Breast epithelium (tissue), 4 donors: ENCODE measurements at regions of chrX and their contacts with region 1.

Region 1: GRCh38 chrX:118164138-118164537 is 47.5 kb upstream of the KLHL13 start:
- DNase-seq: no peak
- H3K4me3 ChIP-seq: no peak overlapping the region
- H3K27ac ChIP-seq: no peak overlapping the region
- H3K4me1 ChIP-seq: no peaks in the 10 kb centered on the region
- H3K27me3 ChIP-seq: peaks cover 0 to 2% of the 10 kb centered on the region in 2 donors
- CTCF ChIP-seq: no peak
- POLR2A ChIP-seq: no peak

Region 2: DNA sequence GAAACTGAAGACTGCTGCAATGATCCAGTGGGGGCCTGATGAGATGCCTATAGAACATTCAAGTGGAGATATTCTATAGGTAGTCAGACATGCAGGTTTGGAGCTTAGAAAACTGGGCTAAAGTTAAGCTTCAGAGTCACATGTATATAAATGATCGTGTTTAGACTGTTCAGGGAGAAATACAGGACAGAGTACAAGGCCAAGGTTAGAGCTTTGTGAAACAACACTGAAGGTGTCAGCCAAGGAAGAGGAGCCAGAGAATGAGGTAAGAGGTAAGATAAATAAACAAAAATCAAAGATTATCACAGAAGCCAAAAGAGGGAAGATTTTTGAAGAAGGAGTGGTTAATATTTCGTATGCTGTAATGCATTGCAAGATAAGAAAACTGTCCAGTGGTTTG is 10.4 kb after region 1 on chrX:
- intact Hi-C with region 1: loop called (anchors 1 kb)
- DNase-seq: no peak
- H3K4me3 ChIP-seq: no peak overlapping the region
- H3K27ac ChIP-seq: no peak overlapping the region
- H3K4me1 ChIP-seq: no peaks in the 10 kb centered on the region
- H3K27me3 ChIP-seq: peaks cover 0 to 3% of the 10 kb centered on the region in 2 donors
- CTCF ChIP-seq: no peak
- POLR2A ChIP-seq: no peak